IMR-90 (cell line): ENCODE measurements at regions of chr1 and their contacts with region 1.

Region 1: GRCh38 chr1:5915587-5916571 is 76.3 kb downstream of the NPHP4 start:
- DNase-seq: peak; percentile 65
- ATAC-seq: peak; percentile 84
- H3K4me3 ChIP-seq: no peak overlapping the region
- H3K27ac ChIP-seq: no peak overlapping the region
- H3K4me1 ChIP-seq: peaks cover 5% of the 10 kb centered on the region
- H3K27me3 ChIP-seq: no peaks in the 10 kb centered on the region
- CTCF ChIP-seq: peak; percentile 84
- POLR2A ChIP-seq: no peak
- RAD21 ChIP-seq: peak; percentile 73

Region 2: DNA sequence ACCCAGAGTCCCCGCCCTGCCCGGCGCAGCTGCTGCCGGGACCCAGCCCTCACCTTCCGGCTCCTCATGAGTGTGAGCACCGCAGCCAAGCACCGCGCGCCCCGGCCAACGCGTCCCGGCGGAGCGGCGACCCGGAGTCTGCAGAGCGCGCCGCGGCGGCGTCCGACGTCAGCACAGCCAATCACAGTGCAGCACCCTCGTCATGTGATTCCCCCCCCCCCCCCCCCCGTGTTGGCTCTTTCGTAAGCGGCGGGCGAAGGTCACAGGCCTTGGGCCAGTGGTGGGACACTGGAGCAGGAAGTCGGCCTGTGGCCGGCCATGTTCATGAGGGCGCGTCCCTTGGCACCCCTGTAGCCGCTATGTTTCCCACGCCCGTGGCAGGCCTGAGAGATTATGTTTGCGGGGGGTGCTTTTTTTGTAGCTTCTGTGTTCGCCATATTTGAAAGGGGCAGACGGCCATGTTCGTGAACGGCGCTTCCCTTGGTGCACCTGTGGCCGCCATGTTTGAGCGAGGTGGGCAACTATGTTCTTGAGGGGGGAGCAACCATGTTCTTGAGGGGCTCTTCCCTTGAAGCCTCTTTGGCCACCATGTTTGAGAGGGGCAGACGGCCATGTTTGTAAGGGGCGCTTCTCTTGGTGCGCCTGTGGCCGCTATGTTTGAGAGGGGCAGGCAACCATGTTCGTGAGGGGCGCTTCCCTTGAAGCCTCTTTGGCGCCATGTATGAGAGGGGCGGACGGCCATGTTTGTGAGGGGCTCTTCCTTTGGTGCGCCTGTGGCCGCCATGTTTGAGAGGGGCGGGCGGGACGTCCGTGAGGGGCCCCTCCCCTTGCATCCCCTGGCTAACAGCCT is 2015.5 kb before region 1 on chr1 and contains the start of gene C1orf174:
- CTCF ChIA-PET with region 1: no interaction called
- POLR2A ChIA-PET with region 1: no interaction called
- dilution Hi-C with region 1: no loop called
- in situ Hi-C with region 1: loop called (anchors 25 kb)
- intact Hi-C with region 1: no loop called
- DNase-seq: peak; percentile 98
- ATAC-seq: peak; percentile 88
- H3K4me3 ChIP-seq: peak within 1 kb of the TSS; percentile 60
- H3K27ac ChIP-seq: peak within 1 kb of the TSS; percentile 78
- H3K4me1 ChIP-seq: peaks cover 9% of the 10 kb centered on the region
- H3K27me3 ChIP-seq: no peaks in the 10 kb centered on the region
- CTCF ChIP-seq: no peak
- POLR2A ChIP-seq: peak; percentile 44; the same call in 1 of the 2 replicates
- RAD21 ChIP-seq: no peak
- total RNA-seq, gene C1orf174: 45.7 and 49.7 TPM in 2 replicates

Region 3: GRCh38 chr1:5514519-5515183 is 401.2 kb before region 1 on chr1:
- CTCF ChIA-PET with region 1: interaction called, 3 read pairs
- POLR2A ChIA-PET with region 1: no interaction called
- dilution Hi-C with region 1: no loop called
- in situ Hi-C with region 1: loop called (anchors 5 kb)
- intact Hi-C with region 1: loop called (anchors 1 kb)
- DNase-seq: peak; percentile 7
- ATAC-seq: peak; percentile 87
- H3K4me3 ChIP-seq: no peak overlapping the region
- H3K27ac ChIP-seq: no peak overlapping the region
- H3K4me1 ChIP-seq: no peaks in the 10 kb centered on the region
- H3K27me3 ChIP-seq: no peaks in the 10 kb centered on the region
- CTCF ChIP-seq: peak; percentile 75
- POLR2A ChIP-seq: no peak
- RAD21 ChIP-seq: peak; percentile 36; the same call in 1 of the 2 replicates

Region 4: DNA sequence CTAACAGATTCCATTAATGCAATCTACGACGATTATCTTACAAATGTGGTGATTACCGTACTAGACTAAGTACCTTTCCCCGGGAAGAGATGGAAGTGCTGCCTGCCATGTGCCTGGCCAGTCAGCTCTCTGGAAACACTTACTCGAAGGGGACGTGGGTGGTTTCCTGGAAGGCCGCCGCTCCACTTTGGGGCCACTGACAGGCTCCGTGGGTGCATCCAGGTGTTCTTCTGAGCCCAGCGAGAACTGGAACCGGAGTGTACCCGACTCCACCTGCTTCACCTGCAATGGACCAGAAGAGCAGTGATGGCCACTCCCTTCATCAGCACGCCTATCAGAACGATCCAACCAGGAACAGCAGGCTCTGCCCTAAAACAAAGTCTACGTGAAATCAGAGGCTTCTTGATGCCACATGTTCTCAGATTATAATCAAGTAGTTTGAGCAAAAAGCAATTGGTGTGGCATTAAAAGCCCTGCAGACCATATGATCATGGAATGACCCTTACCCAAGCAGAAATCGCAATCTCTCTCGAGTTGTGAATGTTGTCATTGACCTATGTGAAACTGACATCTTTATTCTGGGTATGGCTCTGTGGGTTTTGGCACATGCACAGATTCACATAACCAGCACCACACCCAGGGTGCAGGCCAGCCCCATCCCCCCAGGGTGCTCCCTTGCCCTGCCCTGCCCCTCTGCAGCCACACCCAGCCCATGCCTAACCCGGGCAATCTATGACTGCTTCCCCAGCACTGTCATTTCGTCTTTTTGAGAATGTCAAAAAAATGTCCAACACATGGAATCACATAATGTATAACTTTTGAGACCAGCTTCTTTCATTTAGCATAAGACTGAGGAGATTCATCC is 11.9 kb after region 1 on chr1:
- CTCF ChIA-PET with region 1: no interaction called
- POLR2A ChIA-PET with region 1: no interaction called
- dilution Hi-C with region 1: no loop called
- in situ Hi-C with region 1: no loop called
- intact Hi-C with region 1: no loop called
- DNase-seq: no peak
- ATAC-seq: no peak
- H3K4me3 ChIP-seq: no peak overlapping the region
- H3K27ac ChIP-seq: no peak overlapping the region
- H3K4me1 ChIP-seq: no peaks in the 10 kb centered on the region
- H3K27me3 ChIP-seq: no peaks in the 10 kb centered on the region
- CTCF ChIP-seq: no peak
- POLR2A ChIP-seq: no peak
- RAD21 ChIP-seq: no peak

Region 5: GRCh38 chr1:5975133-5975880 is 59.4 kb after region 1 on chr1:
- CTCF ChIA-PET with region 1: no interaction called
- POLR2A ChIA-PET with region 1: no interaction called
- dilution Hi-C with region 1: no loop called
- in situ Hi-C with region 1: no loop called
- intact Hi-C with region 1: loop called (anchors 2 kb)
- DNase-seq: peak; percentile 64
- ATAC-seq: peak; percentile 98
- H3K4me3 ChIP-seq: no peak overlapping the region
- H3K27ac ChIP-seq: no peak overlapping the region
- H3K4me1 ChIP-seq: peaks cover 1% of the 10 kb centered on the region; the same call in 1 of the 2 replicates
- H3K27me3 ChIP-seq: no peaks in the 10 kb centered on the region
- CTCF ChIP-seq: peak; percentile 87
- POLR2A ChIP-seq: no peak
- RAD21 ChIP-seq: peak; percentile 95

Region 6: DNA sequence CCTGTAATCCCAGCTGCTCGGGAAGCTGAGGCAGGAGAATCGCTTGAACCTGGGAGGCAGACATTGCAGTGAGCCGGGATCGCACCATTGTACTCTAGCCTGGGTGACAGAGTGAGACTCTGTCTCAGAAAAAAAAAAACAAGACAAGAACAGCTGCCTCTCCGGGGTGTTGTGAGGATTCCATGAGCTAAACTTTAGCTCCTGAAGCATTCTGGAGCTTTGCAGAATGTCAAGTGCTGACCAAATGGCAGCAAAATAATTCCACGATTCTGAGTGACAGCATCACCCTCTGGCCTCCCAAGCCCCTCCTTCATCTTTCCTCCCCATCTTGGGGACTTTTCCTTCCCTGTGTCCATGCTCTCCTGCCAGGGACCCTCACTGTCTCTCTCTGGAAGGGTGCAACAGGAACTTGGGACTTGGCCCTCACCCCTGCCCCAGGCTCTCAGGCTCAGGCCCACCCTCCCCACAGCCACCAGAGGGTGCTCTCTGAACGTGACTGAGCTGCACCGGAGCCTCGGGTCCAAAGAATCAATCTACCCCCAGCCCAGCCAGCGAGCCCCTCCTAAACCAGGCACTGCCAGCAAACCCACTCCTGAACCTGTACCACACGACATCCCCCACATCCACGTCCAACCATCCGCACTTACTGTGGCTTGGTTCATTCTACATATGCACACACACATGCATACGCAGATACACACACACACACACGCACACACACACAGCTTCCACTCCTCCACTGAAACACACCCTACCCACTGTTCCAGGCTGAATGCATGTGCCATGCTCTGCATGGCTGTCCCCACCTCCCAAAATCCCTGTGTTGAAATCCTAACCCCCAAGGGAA is 432.0 kb after region 1 on chr1:
- CTCF ChIA-PET with region 1: no interaction called
- POLR2A ChIA-PET with region 1: no interaction called
- dilution Hi-C with region 1: no loop called
- in situ Hi-C with region 1: no loop called
- intact Hi-C with region 1: no loop called
- DNase-seq: peak; percentile 19
- ATAC-seq: peak; percentile 47; the same call in 1 of the 2 replicates
- H3K4me3 ChIP-seq: no peak overlapping the region
- H3K27ac ChIP-seq: no peak overlapping the region
- H3K4me1 ChIP-seq: no peaks in the 10 kb centered on the region; the same call in 1 of the 2 replicates
- H3K27me3 ChIP-seq: no peaks in the 10 kb centered on the region
- CTCF ChIP-seq: peak; percentile 64
- POLR2A ChIP-seq: no peak
- RAD21 ChIP-seq: peak; percentile 75